K562 (cell line): ENCODE measurements at regions of chr1 and their contacts with region 1.

Region 1: DNA sequence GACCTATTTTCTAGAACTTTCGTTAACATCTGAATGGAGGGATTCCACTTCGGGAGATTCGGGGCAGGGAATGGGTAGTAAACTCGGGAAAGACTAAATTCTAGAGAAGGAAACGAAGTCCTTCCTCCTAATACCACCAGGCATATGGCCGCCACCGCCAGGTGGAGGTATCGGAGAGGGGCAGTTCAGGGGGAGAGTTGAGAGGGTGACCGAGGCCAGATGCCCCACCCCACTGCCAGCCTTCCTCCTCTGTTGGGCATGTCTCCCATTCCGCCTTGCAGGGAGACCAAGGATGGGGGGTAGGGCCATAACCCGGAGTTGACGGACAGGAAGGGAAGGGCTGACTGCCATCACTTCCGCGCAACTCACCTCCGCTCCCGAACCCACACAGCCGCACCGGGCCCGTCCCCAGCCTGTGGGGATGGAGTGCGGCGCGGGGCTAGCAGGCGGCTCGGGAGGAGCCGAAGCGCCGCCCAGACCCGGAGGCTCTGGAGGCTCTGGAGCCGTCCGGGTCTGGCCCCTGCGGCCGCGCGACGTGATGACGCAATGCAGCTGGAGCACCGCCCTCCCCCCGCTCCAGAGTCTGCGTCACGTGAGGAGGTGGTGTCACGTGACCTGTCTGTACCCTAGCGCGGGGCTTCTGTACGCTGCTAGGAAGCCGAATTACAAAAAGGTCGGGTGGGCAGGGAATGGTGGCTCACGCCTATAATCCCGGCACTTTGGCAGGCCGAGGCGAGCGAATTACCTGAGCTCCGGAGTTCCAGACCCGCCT is at the start of gene KLHL12:
- DNase-seq: peak; percentile 99
- ATAC-seq: peak; percentile 98
- H3K4me3 ChIP-seq: peak within 1 kb of the TSS; percentile 88
- H3K27ac ChIP-seq: peak within 1 kb of the TSS; percentile 88
- H3K4me1 ChIP-seq: peaks cover 0 to 11% of the 10 kb centered on the region in 2 experiments; a peak in 3 of 5 replicates
- H3K27me3 ChIP-seq: no peaks in the 10 kb centered on the region
- CTCF ChIP-seq: peak; percentile 81 to 87 (median 83)
- EP300 ChIP-seq: peak; percentile 66; the same call in 1 of the 2 replicates
- POLR2A ChIP-seq: peak; percentile 96
- RAD21 ChIP-seq: peak; percentile 74 to 80
- polyA plus RNA-seq, gene KLHL12: 23.1 to 25.7 TPM

Region 2: DNA sequence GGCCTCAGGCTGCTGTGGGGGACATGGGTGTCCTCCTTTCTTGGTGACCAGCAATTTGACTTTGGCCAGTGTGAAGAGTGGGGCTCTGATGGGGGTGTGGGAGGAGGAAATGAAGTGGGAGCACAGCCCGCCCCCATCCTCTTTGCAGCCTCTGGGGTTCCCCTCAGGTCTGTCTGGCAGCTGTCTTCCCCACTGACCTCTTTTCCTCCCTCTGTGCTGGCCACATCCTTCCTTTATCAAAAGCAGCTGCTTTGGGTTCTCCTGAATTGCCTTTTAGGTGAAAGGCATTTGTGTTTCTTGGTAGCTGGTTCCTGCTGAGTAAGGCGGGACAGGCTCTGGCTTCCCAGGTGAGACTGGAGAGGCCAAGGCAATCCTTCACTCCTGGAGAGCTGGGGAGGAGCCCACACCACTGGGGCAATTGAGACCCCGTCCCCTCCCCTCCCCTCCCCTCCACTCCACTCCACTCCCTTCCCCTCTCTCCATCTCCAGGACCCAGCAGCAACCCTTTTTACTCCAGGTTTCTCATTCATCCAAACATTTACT is 91.3 kb before region 1 on chr1:
- CTCF ChIA-PET with region 1: no interaction called
- POLR2A ChIA-PET with region 1: no interaction called
- in situ Hi-C with region 1: no loop called
- intact Hi-C with region 1: no loop called
- DNase-seq: no peak
- ATAC-seq: no peak; the same call in 2 of the 3 replicates
- H3K4me3 ChIP-seq: no peak overlapping the region
- H3K27ac ChIP-seq: no peak overlapping the region
- H3K4me1 ChIP-seq: peaks cover 3% of the 10 kb centered on the region in 2 experiments; a peak in 3 of 5 replicates
- H3K27me3 ChIP-seq: peaks cover 2 to 5% of the 10 kb centered on the region in 2 experiments; a peak in 1 of 5 replicates
- CTCF ChIP-seq: no peak
- EP300 ChIP-seq: no peak
- POLR2A ChIP-seq: no peak
- RAD21 ChIP-seq: no peak

Region 3: DNA sequence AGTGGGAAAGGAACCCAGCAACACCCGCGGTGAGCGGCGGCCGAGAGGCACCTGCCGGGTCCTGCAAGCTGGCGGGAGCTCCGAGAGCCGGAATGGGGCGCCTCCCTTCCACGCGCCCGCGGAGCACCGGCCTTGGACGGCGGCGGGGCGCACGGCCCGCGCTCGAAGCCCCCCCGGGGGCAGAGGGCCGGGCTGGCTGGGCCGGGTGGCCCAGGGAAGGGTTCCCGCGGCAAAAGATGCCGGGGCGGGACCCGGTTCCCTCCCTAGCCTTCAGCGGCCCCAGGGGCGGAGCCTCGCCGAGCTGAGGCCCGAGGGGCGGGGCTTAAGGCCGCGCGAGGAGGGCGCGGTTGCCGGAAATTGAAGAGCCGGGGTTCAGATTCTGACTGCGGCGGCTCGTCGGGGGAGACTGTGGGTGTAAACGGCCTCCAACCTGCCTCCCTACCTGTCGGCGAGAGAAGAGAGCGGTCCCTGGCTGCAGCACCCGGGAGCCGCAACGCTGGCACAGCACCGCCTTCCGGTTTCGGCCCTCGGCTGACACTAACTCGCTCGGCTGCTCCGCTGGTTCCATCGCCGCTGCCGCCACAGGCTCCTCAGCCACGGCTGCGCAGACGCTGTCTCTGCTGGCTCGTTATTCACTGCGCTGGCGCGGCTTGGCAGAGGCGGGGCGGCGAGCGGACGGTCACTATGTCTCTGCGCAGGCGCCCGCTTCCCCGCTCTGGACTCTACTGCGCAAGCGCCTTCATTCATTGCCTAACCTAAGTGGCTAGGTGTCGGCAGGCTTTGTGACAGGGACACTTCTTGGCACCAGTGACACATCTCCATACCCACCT is 38.2 kb before region 1 on chr1 and contains the start of gene RABIF:
- CTCF ChIA-PET with region 1: no interaction called
- POLR2A ChIA-PET with region 1: no interaction called
- in situ Hi-C with region 1: no loop called
- intact Hi-C with region 1: loop called (anchors 2 kb)
- DNase-seq: peak; percentile 98 to 99 (median 99)
- ATAC-seq: peak; percentile 96
- H3K4me3 ChIP-seq: peak within 1 kb of the TSS; percentile 63
- H3K27ac ChIP-seq: peak within 1 kb of the TSS; percentile 83
- H3K4me1 ChIP-seq: peaks cover 10 to 24% of the 10 kb centered on the region in 2 experiments
- H3K27me3 ChIP-seq: no peaks in the 10 kb centered on the region
- CTCF ChIP-seq: peak; percentile 17 to 48 (median 24); a peak in 3 of 6 replicates
- EP300 ChIP-seq: no peak
- POLR2A ChIP-seq: peak; percentile 99
- RAD21 ChIP-seq: no peak
- polyA plus RNA-seq, gene RABIF: 8.7 to 10.1 TPM

Region 4: DNA sequence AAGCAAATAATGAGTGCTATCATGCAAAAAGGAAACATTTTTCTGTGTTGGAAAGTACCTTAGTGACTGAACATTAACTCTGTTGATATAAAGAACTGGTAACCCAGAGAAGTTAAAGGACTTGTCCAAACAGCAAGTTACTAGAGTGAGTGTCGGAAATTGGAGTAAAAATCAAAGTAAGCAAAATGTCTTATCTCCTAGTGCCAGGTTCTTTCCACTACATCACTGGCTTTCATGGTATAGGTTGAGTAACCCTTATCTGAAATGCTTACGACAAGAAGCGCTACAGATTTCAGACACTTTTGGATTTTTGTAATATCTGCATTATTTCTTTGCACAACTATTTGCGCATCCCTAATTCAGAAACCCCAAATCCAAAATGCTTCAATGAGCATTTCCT is 21.6 kb before region 1 on chr1:
- CTCF ChIA-PET with region 1: no interaction called
- POLR2A ChIA-PET with region 1: no interaction called
- in situ Hi-C with region 1: no loop called
- intact Hi-C with region 1: no loop called
- DNase-seq: no peak
- ATAC-seq: no peak
- H3K4me3 ChIP-seq: no peak overlapping the region
- H3K27ac ChIP-seq: no peak overlapping the region
- H3K4me1 ChIP-seq: no peaks in the 10 kb centered on the region
- H3K27me3 ChIP-seq: no peaks in the 10 kb centered on the region
- CTCF ChIP-seq: no peak
- EP300 ChIP-seq: no peak
- POLR2A ChIP-seq: no peak
- RAD21 ChIP-seq: no peak

Region 5: DNA sequence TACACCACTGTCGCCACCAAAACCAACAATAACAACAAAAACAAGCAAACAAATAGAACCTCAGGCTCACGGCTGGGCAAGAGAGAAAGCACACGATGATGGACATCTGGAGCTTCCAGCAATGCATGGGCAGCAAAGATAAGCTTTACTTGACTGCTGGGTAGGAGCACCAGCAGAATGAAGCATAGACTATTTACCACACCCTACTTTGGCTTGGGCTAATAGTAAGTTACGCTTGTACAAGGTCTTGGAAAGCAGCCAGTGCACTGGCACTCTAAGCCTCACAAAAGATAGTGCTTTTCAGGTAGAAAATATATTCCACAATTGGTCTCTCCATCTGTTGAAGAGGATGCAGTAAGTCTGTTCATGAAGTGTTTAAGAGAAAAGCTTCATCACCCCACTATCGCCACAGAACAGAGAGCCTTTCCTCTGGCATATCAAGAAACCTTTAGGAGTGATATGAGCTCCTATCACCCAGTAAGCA is 17.6 kb after region 1 on chr1:
- CTCF ChIA-PET with region 1: no interaction called
- POLR2A ChIA-PET with region 1: interaction called, 10 read pairs
- in situ Hi-C with region 1: no loop called
- intact Hi-C with region 1: no loop called
- DNase-seq: peak; percentile 80 to 93 (median 88)
- ATAC-seq: peak; percentile 94
- H3K4me3 ChIP-seq: no peak overlapping the region
- H3K27ac ChIP-seq: peak overlapping the region; percentile 58
- H3K4me1 ChIP-seq: peaks cover 2 to 28% of the 10 kb centered on the region in 2 experiments; a peak in 3 of 5 replicates
- H3K27me3 ChIP-seq: no peaks in the 10 kb centered on the region
- CTCF ChIP-seq: 0 out of 6 replicates have a peak, but pooled peaks of 1 of the 3 experiments have one; percentile 1
- EP300 ChIP-seq: peak; percentile 73
- POLR2A ChIP-seq: no peak
- RAD21 ChIP-seq: no peak

Region 6: GRCh38 chr1:202957733-202958543 is 31.0 kb after region 1 on chr1 and contains the start of gene ADIPOR1:
- CTCF ChIA-PET with region 1: no interaction called
- POLR2A ChIA-PET with region 1: no interaction called
- in situ Hi-C with region 1: no loop called
- intact Hi-C with region 1: loop called (anchors 2 kb)
- DNase-seq: peak; percentile 96 to 99 (median 98)
- ATAC-seq: peak; percentile 97
- H3K4me3 ChIP-seq: peak within 1 kb of the TSS; percentile 97
- H3K27ac ChIP-seq: peak within 1 kb of the TSS; percentile 90
- H3K4me1 ChIP-seq: peaks cover 15 to 34% of the 10 kb centered on the region in 2 experiments
- H3K27me3 ChIP-seq: no peaks in the 10 kb centered on the region
- CTCF ChIP-seq: peak in 2 of 3 experiments; percentile 3 to 21; a peak in 1 of 6 replicates
- EP300 ChIP-seq: no peak
- POLR2A ChIP-seq: peak; percentile 87
- RAD21 ChIP-seq: peak in 1 of 2 experiments; percentile 0; a peak in 1 of 4 replicates
- polyA plus RNA-seq, gene ADIPOR1: 29.0 to 33.4 TPM

Region 7: GRCh38 chr1:202968840-202969295 is 42.0 kb after region 1 on chr1:
- CTCF ChIA-PET with region 1: no interaction called
- POLR2A ChIA-PET with region 1: no interaction called
- in situ Hi-C with region 1: no loop called
- intact Hi-C with region 1: loop called (anchors 1 kb)
- DNase-seq: peak; percentile 74 to 90 (median 81)
- ATAC-seq: peak; percentile 90
- H3K4me3 ChIP-seq: no peak overlapping the region
- H3K27ac ChIP-seq: no peak overlapping the region; the same call in 2 of the 3 replicates
- H3K4me1 ChIP-seq: peaks cover 20 to 24% of the 10 kb centered on the region in 2 experiments
- H3K27me3 ChIP-seq: no peaks in the 10 kb centered on the region; a peak in 1 of 5 replicates
- CTCF ChIP-seq: peak; percentile 94 to 96 (median 95)
- EP300 ChIP-seq: peak; percentile 41; the same call in 1 of the 2 replicates
- POLR2A ChIP-seq: no peak
- RAD21 ChIP-seq: peak; percentile 69 to 80